Dendritic cell treated with granulocyte-macrophage colony-stimulating factor and Interleukin-4, amounts not matched to agents 40 ng/mL and 50 ng/mL, for 4 days (primary cell): ENCODE measurements at regions of chr11 and their contacts with region 1.

Region 1: GRCh38 chr11:5380740-5381342 is 2.8 kb upstream of the OR51M1 start:
- H3K4me3 Mint-ChIP-seq: no peak overlapping the region
- H3K27ac Mint-ChIP-seq: no peak overlapping the region
- H3K4me1 Mint-ChIP-seq: no peaks in the 10 kb centered on the region
- H3K27me3 Mint-ChIP-seq: no peaks in the 10 kb centered on the region

Region 2: DNA sequence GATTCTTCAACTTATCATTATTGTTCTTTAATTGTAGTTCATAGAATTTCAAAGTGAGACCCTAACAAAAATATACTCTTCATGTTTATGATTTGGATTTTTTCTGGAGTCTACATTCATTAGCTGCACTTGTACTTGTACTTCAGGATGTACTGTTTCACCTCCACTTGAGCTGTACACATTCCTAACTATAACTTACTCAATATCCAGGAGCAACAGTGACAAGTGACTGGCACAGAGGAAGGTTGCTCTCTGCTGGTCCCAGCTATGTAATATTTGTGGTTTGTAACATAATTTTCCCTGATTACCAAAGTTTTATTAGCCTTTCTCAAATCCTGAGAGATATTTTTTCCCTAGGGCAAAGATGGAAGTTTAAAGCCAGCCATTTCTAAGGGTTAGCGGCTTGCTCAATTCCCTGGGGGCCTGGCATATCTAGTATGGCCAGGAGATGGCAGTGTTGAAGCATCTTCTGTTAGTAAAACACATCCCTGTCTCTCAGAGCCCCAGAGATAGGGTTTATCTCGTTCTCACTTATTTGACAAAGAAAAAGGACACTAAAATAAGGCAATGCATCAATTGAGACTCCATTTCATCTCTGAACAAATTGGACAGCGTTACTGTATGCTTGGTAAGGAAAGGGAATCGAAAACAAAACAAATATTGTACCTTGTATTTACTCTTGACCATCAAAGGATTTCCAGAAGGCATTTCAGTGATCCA is 256.9 kb before region 1 on chr11:
- intact Hi-C with region 1: loop called (anchors 1 kb)
- H3K4me3 Mint-ChIP-seq: no peak overlapping the region
- H3K27ac Mint-ChIP-seq: no peak overlapping the region
- H3K4me1 Mint-ChIP-seq: no peaks in the 10 kb centered on the region
- H3K27me3 Mint-ChIP-seq: no peaks in the 10 kb centered on the region

Region 3: GRCh38 chr11:5188201-5188600 is 192.6 kb before region 1 on chr11:
- intact Hi-C with region 1: no loop called
- H3K4me3 Mint-ChIP-seq: no peak overlapping the region
- H3K27ac Mint-ChIP-seq: no peak overlapping the region
- H3K4me1 Mint-ChIP-seq: no peaks in the 10 kb centered on the region
- H3K27me3 Mint-ChIP-seq: no peaks in the 10 kb centered on the region

Region 4: DNA sequence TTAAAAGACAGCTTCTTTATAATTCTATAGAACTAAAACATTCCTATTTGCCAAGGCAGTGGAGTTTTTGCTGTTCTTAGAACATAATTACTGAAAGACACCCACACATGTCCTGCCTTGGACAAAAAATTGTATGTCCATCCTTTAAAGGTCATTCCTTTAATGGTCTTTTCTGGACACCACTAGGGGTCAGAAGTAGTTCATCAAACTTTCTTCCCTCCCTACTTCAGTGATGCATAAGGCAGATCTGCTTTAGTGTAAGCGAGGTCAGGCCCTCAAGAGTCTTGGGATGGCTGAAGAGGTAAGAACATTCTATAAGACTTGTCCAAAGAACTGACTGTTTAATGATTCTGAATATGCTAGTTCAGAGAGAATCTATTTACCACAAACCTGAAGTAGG is 176.1 kb before region 1 on chr11:
- intact Hi-C with region 1: loop called (anchors 1 kb)
- H3K4me3 Mint-ChIP-seq: no peak overlapping the region
- H3K27ac Mint-ChIP-seq: no peak overlapping the region
- H3K4me1 Mint-ChIP-seq: no peaks in the 10 kb centered on the region
- H3K27me3 Mint-ChIP-seq: no peaks in the 10 kb centered on the region